ENCODE measurements at regions of chr22 and their contacts with region 1.

Region 1: GRCh38 chr22:41589391-41590241 is at the start of gene PMM1:
- DNase-seq: peak; percentile 100
- ATAC-seq: peak; percentile 97
- H3K4me3 ChIP-seq: peak within 1 kb of the TSS; percentile 19 to 81 (median 73)
- H3K4me3 Mint-ChIP-seq: peak within 1 kb of the TSS; percentile 96
- H3K27ac ChIP-seq: peak within 1 kb of the TSS in 1 of 2 donors; percentile 24
- H3K27ac Mint-ChIP-seq: peak within 1 kb of the TSS; percentile 87
- H3K4me1 ChIP-seq: peaks cover 6 to 18% of the 10 kb centered on the region in 2 donors
- H3K4me1 Mint-ChIP-seq: peaks cover 13% of the 10 kb centered on the region
- H3K27me3 ChIP-seq: no peaks in the 10 kb centered on the region
- H3K27me3 Mint-ChIP-seq: no peaks in the 10 kb centered on the region
- CTCF ChIP-seq: no peak
- total RNA-seq, gene PMM1: 22.1 and 23.3 TPM in 2 replicates

Region 2: GRCh38 chr22:41543854-41544670 is 45.6 kb before region 1 on chr22 and contains the start of gene POLR3H:
- CTCF ChIA-PET with region 1: interaction called, 3 read pairs
- POLR2A ChIA-PET with region 1: interaction called, 6 read pairs
- intact Hi-C with region 1: loop called (anchors 1 kb)
- DNase-seq: peak; percentile 97
- ATAC-seq: peak; percentile 99
- H3K4me3 ChIP-seq: peak within 1 kb of the TSS; percentile 74 to 95 (median 85)
- H3K4me3 Mint-ChIP-seq: peak within 1 kb of the TSS; percentile 100
- H3K27ac ChIP-seq: peak within 1 kb of the TSS; percentile 57 to 74
- H3K27ac Mint-ChIP-seq: peak within 1 kb of the TSS; percentile 97
- H3K4me1 ChIP-seq: peaks cover 17 to 21% of the 10 kb centered on the region in 2 donors
- H3K4me1 Mint-ChIP-seq: peaks cover 41% of the 10 kb centered on the region
- H3K27me3 ChIP-seq: no peaks in the 10 kb centered on the region
- H3K27me3 Mint-ChIP-seq: no peaks in the 10 kb centered on the region
- CTCF ChIP-seq: peak; percentile 42
- total RNA-seq, gene POLR3H: 32.1 and 35.6 TPM in 2 replicates

Region 3: DNA sequence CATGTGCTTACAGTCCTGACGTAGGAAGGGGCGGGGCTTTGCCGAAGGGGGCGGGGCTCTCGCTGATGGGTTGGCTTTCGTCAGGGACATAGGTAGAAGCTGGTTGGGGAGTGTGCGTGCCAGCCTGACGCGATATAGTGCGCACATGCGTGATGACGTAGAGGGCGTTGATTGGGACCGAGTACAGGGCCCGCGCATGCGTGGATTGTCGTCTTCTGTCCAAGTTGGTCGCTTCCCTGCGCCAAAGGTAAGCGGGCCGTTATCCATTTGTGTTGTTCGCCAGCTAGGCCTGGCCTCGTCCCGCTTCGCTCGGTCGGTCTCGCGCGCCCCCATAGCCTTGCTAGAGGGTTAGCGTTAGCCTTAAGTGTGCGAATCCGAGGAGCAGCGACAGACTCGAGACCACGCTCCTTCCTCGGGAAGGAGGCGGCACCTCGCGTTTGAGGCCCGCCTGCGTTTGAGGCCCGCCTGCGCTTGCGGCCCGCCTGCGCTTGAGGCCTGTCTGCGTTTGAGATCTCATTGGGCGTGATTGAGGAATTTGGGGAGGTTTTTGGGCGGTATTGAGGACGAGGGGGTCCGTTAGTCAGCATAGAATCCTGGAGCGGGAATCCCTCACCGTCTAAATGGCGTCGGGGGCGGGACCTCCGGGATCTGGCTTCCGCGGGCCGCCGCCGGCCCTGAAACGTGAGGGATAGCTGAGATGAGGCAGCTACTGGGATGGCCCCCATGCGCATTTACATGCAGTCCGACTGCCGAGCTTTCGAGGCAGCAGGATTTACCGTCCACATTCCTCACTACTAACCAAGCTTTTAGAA is 31.7 kb after region 1 on chr22 and contains the start of gene XRCC6:
- CTCF ChIA-PET with region 1: interaction called, 6 read pairs
- POLR2A ChIA-PET with region 1: interaction called, 10 read pairs
- intact Hi-C with region 1: loop called (anchors 1 kb)
- DNase-seq: peak; percentile 100
- ATAC-seq: peak; percentile 96
- H3K4me3 ChIP-seq: peak within 1 kb of the TSS; percentile 68 to 97 (median 89)
- H3K4me3 Mint-ChIP-seq: peak within 1 kb of the TSS; percentile 96
- H3K27ac ChIP-seq: peak within 1 kb of the TSS; percentile 95 to 96
- H3K27ac Mint-ChIP-seq: peak within 1 kb of the TSS; percentile 94
- H3K4me1 ChIP-seq: peaks cover 19 to 27% of the 10 kb centered on the region in 2 donors
- H3K4me1 Mint-ChIP-seq: peaks cover 39% of the 10 kb centered on the region
- H3K27me3 ChIP-seq: no peaks in the 10 kb centered on the region
- H3K27me3 Mint-ChIP-seq: no peaks in the 10 kb centered on the region
- CTCF ChIP-seq: no peak
- total RNA-seq, gene XRCC6: 176 and 180 TPM in 2 replicates

Measured in B cell (primary cell).